Mammary epithelial cell (primary cell): ENCODE measurements at regions of chr20 and their contacts with region 1.

Region 1: DNA sequence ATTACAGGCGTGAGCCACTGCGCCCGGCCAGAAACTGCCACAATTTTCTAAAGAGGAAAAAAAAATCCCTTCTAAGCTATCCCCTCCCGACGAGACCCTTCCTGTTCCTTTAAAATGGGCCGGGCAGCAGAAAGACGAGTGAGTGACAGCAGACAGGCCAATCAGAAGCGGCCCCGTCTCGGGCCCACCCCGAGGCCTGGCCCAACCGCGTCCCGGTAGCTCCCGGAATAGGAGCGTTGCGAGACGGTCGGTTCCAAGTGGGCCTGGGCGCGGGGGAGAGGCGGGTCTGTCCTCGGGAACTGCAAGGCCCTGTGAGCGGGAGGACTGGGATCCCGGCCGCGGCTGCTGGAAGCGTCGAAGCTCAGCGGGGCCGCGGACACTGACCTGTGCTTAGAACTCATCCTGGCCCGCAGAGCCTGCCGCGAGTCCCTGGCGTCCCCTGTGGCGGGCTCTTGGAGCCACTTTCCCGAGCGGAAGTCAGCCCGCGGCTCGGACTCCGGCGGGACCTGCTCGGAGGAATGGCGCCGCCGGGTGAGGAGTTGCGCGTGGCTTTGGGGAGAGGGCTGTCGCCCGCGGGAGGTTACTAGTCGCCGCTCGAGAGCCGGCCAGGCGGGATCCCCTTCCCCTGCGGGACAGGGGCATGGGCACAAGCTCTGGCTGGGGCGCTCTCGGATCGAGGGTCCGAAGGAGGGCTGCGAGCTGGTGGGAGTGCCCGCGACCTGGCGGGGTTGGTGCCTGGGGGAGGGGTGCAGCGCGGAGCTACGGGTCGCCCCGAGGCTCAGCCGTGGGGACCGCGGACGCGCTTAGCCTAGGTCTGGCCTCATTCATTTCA is at the starts of genes MROH8 and RPN2:
- DNase-seq: peak; percentile 97
- H3K4me3 ChIP-seq: peak within 1 kb of the TSS; percentile 79 to 87 (median 87)
- H3K27ac ChIP-seq: peak within 1 kb of the TSS; percentile 90
- H3K4me1 ChIP-seq: peaks cover 17% of the 10 kb centered on the region
- H3K27me3 ChIP-seq: no peaks in the 10 kb centered on the region
- CTCF ChIP-seq: peak in 1 of 2 donors; percentile 12
- total RNA-seq, gene MROH8: 0.67 to 1.3 TPM
- total RNA-seq, gene RPN2: 157 to 181 TPM

Region 2: DNA sequence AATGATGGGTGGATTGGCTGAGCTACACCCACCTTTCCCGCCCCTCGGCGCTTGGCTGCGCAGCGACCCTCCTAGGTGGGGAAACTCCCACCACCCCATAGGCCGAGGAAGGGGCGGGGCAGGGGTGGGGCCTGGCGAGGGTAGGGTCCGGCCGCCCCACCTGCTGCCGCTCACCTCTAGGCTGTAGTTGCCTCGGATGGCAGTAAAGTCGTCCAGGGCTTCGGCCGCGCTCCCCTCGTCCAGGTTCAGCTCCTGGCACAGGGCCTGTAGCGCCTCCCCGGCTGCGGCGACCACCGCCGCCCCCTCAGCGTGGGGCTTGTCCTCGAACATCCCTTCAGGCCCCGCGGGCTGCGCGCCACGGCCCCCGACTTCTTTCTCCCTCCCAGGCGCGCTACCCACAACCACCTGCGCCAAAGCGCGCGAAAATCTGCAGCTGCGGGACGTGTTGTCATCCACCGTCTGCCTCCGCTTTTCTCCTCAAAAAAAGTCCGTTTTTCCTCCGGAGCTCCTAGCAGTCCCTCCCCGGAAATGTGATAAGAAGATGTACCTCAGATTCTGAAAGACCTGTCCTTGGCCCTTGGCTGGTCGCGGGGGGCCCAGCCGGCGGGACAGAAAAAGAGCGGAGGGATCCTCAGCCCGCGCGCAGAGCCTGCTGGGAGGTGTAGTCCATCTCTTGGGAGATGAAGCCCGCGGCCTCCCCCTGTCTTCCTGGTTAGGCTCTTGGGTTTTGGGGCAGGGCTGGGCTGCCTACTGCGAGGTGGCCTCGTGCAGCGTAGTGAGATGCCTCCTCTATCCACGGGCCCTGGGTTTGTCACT is 83.2 kb before region 1 on chr20 and contains the start of gene RBL1:
- CTCF ChIA-PET with region 1: no interaction called
- dilution Hi-C with region 1: no loop called
- in situ Hi-C with region 1: no loop called
- intact Hi-C with region 1: loop called (anchors 2 kb)
- DNase-seq: peak; percentile 85
- H3K4me3 ChIP-seq: peak within 1 kb of the TSS; percentile 77 to 83 (median 81)
- H3K27ac ChIP-seq: peak within 1 kb of the TSS; percentile 75
- H3K4me1 ChIP-seq: peaks cover 11% of the 10 kb centered on the region
- H3K27me3 ChIP-seq: no peaks in the 10 kb centered on the region
- CTCF ChIP-seq: peak in 1 of 2 donors; percentile 35
- total RNA-seq, gene RBL1: 2.7 to 13.2 TPM